ENCODE measurements at regions of chr13 and their contacts with region 1.

Region 1: GRCh38 chr13:41944635-41945397 is 16.1 kb downstream of the VWA8 start:
- DNase-seq: no peak

Region 2: DNA sequence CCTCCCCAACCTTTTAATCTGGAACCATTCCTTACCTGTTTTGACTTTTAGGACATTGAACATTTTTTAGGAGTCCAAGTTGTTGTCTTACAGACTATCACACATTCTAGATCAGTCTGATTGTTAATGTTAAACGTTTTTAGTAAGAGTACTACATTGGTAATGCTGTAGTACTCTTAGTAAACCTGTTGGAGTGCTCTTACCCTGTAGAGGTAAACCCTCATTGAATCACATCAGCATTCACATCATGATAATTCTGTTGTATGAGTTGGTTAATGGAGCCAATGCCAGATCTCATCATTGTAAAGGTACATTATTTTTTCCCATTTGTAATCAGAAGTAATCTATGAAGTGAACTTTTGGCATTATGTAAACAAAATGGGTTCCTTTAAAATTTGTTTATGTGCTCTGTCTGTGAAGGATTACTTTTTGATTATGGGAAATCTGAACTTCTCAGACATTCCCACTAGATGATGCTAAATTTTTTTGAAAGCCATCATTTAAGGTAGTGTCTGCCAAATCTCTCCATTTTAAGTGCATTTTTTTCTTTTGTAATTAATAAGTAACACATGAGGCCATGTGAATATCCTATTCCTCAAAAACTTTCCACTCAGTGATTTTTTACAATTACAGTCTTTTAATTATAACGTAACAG is 39.1 kb before region 1 on chr13:
- intact Hi-C with region 1: loop called in 1 of 2 experiments (anchors 1 kb)
- DNase-seq: no peak

Measured in posterior vena cava (tissue), 2 donors.